Activated CD4-positive, alpha-beta T cell treated with anti-CD3 and anti-CD28 coated beads for 36 hours (primary cell): ENCODE measurements at regions of chr11 and their contacts with region 1.

Region 1: GRCh38 chr11:95790123-95790932 is at the start of gene CEP57:
- DNase-seq: peak; percentile 98
- ATAC-seq: peak; percentile 67
- H3K4me3 Mint-ChIP-seq: peak within 1 kb of the TSS; percentile 99
- H3K27ac Mint-ChIP-seq: peak within 1 kb of the TSS; percentile 100
- H3K4me1 Mint-ChIP-seq: peaks cover 53% of the 10 kb centered on the region
- H3K27me3 Mint-ChIP-seq: no peaks in the 10 kb centered on the region
- total RNA-seq, gene CEP57: 101 to 134 TPM

Region 2: GRCh38 chr11:94493281-94494125 is 1296.8 kb before region 1 on chr11 and contains the starts of genes ANKRD49 and MRE11:
- CTCF ChIA-PET with region 1: no interaction called
- POLR2A ChIA-PET with region 1: no interaction called
- intact Hi-C with region 1: loop called (anchors 5 kb)
- DNase-seq: peak; percentile 97
- ATAC-seq: peak; percentile 100
- H3K4me3 Mint-ChIP-seq: peak within 1 kb of the TSS; percentile 94
- H3K27ac Mint-ChIP-seq: peak within 1 kb of the TSS; percentile 97
- H3K4me1 Mint-ChIP-seq: peaks cover 24% of the 10 kb centered on the region
- H3K27me3 Mint-ChIP-seq: no peaks in the 10 kb centered on the region
- total RNA-seq, gene ANKRD49: 20.8 to 22.4 TPM
- total RNA-seq, gene MRE11: 36.8 to 51.3 TPM

Region 3: GRCh38 chr11:94973099-94973968 is 817.0 kb before region 1 on chr11 and contains the starts of genes CWC15 and KDM4D:
- CTCF ChIA-PET with region 1: interaction called, 5 read pairs
- POLR2A ChIA-PET with region 1: interaction called, 6 read pairs
- intact Hi-C with region 1: loop called (anchors 1 to 5 kb)
- DNase-seq: peak; percentile 97
- ATAC-seq: peak; percentile 99
- H3K4me3 Mint-ChIP-seq: peak within 1 kb of the TSS; percentile 84
- H3K27ac Mint-ChIP-seq: peak within 1 kb of the TSS; percentile 94
- H3K4me1 Mint-ChIP-seq: peaks cover 27% of the 10 kb centered on the region
- H3K27me3 Mint-ChIP-seq: no peaks in the 10 kb centered on the region
- total RNA-seq, gene CWC15: 74.7 to 85.0 TPM
- total RNA-seq, gene KDM4D: 1.5 to 1.8 TPM

Region 4: DNA sequence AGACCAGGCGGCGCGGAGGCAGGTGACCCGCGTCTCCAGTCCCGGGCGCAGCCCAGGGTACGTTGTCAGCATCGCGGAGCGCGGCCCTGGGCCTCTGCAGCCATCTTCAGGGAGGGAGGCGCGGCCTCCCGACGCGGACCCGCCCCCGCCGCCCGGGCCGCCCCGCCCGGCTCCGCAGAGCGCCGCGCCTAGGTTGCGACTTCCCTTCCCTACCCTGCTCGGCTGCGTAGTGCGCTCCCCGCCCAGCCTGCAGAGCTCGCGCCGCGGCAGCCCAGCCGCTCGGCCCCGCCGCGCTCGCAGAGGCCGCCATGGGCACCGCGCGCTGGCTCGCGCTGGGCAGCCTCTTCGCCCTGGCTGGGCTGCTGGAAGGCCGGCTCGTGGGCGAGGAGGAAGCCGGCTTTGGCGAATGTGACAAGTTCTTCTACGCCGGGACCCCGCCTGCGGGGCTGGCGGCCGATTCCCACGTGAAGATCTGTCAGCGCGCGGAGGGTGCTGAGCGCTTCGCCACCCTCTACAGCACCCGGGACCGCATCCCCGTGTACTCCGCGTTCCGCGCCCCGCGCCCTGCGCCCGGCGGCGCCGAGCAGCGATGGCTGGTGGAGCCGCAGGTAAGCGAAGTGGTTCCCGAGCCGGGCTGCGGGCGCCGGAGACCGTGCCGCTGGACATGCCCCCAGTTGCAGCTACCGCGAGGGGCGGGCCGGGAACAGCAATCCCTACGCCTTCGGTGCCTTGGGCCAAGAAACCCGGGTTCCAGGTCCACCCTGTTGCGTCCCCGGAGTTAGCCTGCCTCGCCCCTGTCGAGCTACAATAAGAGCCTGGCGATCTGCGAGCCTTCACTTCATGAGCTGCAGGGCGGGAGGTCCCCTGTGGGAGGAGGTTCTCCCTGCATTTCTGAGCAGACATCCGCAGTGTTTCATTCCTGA is 700.4 kb before region 1 on chr11 and contains the start of gene ENDOD1:
- CTCF ChIA-PET with region 1: no interaction called
- POLR2A ChIA-PET with region 1: interaction called, 7 read pairs
- intact Hi-C with region 1: loop called in 1 of 2 experiments (anchors 1 kb)
- DNase-seq: peak; percentile 91
- ATAC-seq: peak; percentile 91
- H3K4me3 Mint-ChIP-seq: peak within 1 kb of the TSS; percentile 84
- H3K27ac Mint-ChIP-seq: peak within 1 kb of the TSS; percentile 96
- H3K4me1 Mint-ChIP-seq: peaks cover 61% of the 10 kb centered on the region
- H3K27me3 Mint-ChIP-seq: no peaks in the 10 kb centered on the region
- total RNA-seq, gene ENDOD1: 11.1 to 13.1 TPM

Region 5: GRCh38 chr11:95734009-95734572 is 56.2 kb before region 1 on chr11:
- CTCF ChIA-PET with region 1: no interaction called
- POLR2A ChIA-PET with region 1: no interaction called
- intact Hi-C with region 1: no loop called
- DNase-seq: no peak
- ATAC-seq: no peak
- H3K4me3 Mint-ChIP-seq: no peak overlapping the region
- H3K27ac Mint-ChIP-seq: no peak overlapping the region
- H3K4me1 Mint-ChIP-seq: peaks cover 7% of the 10 kb centered on the region
- H3K27me3 Mint-ChIP-seq: peaks cover 3% of the 10 kb centered on the region

Region 6: GRCh38 chr11:95805869-95806268 is 15.5 kb after region 1 on chr11:
- CTCF ChIA-PET with region 1: no interaction called
- POLR2A ChIA-PET with region 1: no interaction called
- intact Hi-C with region 1: no loop called
- DNase-seq: no peak
- ATAC-seq: no peak
- H3K4me3 Mint-ChIP-seq: no peak overlapping the region
- H3K27ac Mint-ChIP-seq: no peak overlapping the region
- H3K4me1 Mint-ChIP-seq: no peaks in the 10 kb centered on the region
- H3K27me3 Mint-ChIP-seq: no peaks in the 10 kb centered on the region

Region 7: GRCh38 chr11:95923728-95924413 is 133.5 kb after region 1 on chr11 and contains the start of gene MTMR2:
- CTCF ChIA-PET with region 1: no interaction called
- POLR2A ChIA-PET with region 1: no interaction called
- intact Hi-C with region 1: loop called (anchors 1 to 5 kb)
- DNase-seq: peak; percentile 75
- ATAC-seq: peak; percentile 93
- H3K4me3 Mint-ChIP-seq: peak within 1 kb of the TSS; percentile 99
- H3K27ac Mint-ChIP-seq: peak within 1 kb of the TSS; percentile 99
- H3K4me1 Mint-ChIP-seq: peaks cover 25% of the 10 kb centered on the region
- H3K27me3 Mint-ChIP-seq: no peaks in the 10 kb centered on the region
- total RNA-seq, gene MTMR2: 32.8 to 36.5 TPM

Region 8: DNA sequence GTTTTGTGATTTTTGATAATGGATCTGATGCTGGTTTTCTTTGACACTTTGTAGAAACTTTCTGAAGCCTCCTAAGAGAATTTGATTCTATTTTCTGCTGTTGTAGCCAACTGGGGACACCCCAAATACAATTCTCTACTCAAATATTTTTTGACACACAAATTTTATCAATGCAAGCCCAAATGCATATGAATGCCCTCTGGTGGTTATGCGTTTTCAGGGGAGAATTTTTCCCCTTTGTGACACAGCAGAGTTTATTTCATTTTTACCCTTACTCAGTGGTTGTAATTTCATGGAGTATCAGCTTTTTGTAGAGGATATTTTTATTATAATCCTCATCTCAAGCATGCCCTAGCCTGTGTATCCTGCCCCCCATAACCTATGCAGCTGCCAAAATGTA is 178.3 kb after region 1 on chr11:
- CTCF ChIA-PET with region 1: no interaction called
- POLR2A ChIA-PET with region 1: no interaction called
- intact Hi-C with region 1: no loop called
- DNase-seq: no peak
- ATAC-seq: no peak
- H3K4me3 Mint-ChIP-seq: no peak overlapping the region
- H3K27ac Mint-ChIP-seq: no peak overlapping the region
- H3K4me1 Mint-ChIP-seq: no peaks in the 10 kb centered on the region
- H3K27me3 Mint-ChIP-seq: no peaks in the 10 kb centered on the region

Region 9: DNA sequence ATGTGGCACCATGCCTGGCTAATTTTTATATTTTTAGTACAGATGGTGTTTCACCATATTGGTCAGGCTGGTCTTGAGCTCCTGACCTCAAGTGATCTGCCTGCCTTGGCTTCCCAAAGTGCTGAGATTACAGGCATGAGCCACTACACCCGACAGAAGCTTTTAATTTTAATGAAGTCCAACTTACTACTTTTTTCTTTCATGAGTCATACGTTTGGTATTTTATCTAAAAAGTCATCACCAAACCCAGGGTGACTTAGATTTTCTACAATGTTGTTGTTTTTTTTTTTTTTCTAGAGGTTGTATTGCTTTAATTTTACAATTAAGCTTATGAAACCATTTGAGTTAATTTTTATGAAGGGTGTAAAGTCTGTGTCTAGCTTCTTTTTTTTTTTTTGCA is 634.4 kb after region 1 on chr11:
- CTCF ChIA-PET with region 1: interaction called, 4 read pairs
- POLR2A ChIA-PET with region 1: interaction called, 5 read pairs
- intact Hi-C with region 1: loop called in 1 of 2 experiments (anchors 5 kb)
- DNase-seq: no peak
- ATAC-seq: peak; percentile 80
- H3K4me3 Mint-ChIP-seq: no peak overlapping the region
- H3K27ac Mint-ChIP-seq: no peak overlapping the region
- H3K4me1 Mint-ChIP-seq: peaks cover 14% of the 10 kb centered on the region
- H3K27me3 Mint-ChIP-seq: peaks cover 28% of the 10 kb centered on the region